Activated CD4-positive, alpha-beta memory T cell treated with anti-CD3 and anti-CD28 coated beads, Interleukin-2, amount 10 ng/mL, durations not matched to agents 7 days and 5 days (primary cell): ENCODE measurements at regions of chr9 and their contacts with region 1.

Region 1: DNA sequence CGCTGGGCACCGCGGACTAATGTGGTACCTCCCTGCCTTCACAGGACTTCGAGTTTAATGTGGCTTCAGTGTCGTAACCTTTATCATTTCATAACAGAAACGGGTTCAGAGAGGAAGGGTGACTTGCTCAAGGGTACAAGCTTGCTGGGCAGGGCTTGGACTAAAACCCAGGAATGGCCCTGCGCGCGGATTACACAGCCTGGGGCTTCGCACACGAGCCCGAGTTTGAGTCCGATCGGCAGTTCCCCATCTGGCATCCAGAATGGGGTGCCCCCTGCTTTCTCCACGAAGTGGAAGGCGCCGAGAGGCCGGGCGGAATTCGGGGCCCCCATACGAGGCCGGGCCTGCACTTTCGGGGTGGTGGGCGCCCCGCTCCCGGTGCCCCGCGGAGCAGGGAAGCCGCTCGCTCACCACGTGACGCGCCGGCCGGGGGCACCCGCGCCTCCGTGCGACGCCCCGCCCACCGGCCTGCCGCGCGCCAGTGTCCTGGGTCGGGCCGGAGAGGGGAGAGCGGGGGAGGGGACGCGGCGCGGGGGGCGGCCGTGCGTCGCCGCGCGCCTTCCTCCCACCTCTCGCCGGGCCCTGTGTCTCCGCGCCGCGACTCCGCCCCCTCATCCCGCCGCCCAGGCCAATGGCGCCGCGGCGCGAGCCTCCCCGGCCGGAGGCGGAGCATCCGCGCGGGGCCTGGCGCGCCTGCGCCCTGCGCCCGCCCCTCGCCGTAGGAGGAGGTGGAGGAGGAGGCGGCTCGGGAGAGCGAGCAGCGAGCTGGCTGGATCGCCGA is at the start of gene SET:
- DNase-seq: peak; percentile 95
- H3K4me3 Mint-ChIP-seq: peak within 1 kb of the TSS; percentile 98
- H3K27ac Mint-ChIP-seq: peak within 1 kb of the TSS; percentile 92
- H3K4me1 Mint-ChIP-seq: peaks cover 64% of the 10 kb centered on the region
- H3K27me3 Mint-ChIP-seq: no peaks in the 10 kb centered on the region
- total RNA-seq, gene SET: 355 to 379 TPM

Region 2: DNA sequence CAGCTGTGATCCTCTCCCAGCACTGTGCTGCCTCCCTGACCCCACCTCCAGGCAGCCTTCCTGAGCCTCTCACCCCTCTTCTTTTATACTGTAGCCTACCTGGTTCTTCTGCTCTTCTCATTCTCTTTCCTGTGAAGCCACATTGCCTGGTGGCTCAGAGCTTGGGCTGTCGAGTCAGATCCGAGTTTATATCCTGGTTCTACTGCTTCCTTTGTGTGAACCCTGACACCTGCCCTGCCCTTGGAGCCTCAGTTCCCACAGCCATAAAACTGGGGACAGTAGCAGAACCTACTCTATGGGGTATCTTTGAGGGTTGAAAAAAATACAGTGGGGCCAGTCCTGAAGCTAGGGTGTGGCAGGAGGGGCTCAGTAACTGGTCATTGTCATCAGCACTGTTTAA is 339.6 kb before region 1 on chr9:
- CTCF ChIA-PET with region 1: no interaction called
- POLR2A ChIA-PET with region 1: no interaction called
- DNase-seq: no peak
- H3K4me3 Mint-ChIP-seq: no peak overlapping the region
- H3K27ac Mint-ChIP-seq: no peak overlapping the region
- H3K4me1 Mint-ChIP-seq: no peaks in the 10 kb centered on the region
- H3K27me3 Mint-ChIP-seq: no peaks in the 10 kb centered on the region

Region 3: GRCh38 chr9:128438343-128439109 is 250.2 kb before region 1 on chr9:
- CTCF ChIA-PET with region 1: no interaction called
- POLR2A ChIA-PET with region 1: no interaction called
- DNase-seq: peak; percentile 85
- H3K4me3 Mint-ChIP-seq: no peak overlapping the region
- H3K27ac Mint-ChIP-seq: no peak overlapping the region
- H3K4me1 Mint-ChIP-seq: peaks cover 11% of the 10 kb centered on the region
- H3K27me3 Mint-ChIP-seq: no peaks in the 10 kb centered on the region

Region 4: GRCh38 chr9:128523199-128523925 is 165.3 kb before region 1 on chr9:
- CTCF ChIA-PET with region 1: no interaction called
- POLR2A ChIA-PET with region 1: no interaction called
- DNase-seq: no peak
- H3K4me3 Mint-ChIP-seq: no peak overlapping the region
- H3K27ac Mint-ChIP-seq: no peak overlapping the region
- H3K4me1 Mint-ChIP-seq: peaks cover 2% of the 10 kb centered on the region
- H3K27me3 Mint-ChIP-seq: no peaks in the 10 kb centered on the region

Region 5: GRCh38 chr9:128656416-128657343 is 32.0 kb before region 1 on chr9 and contains the start of gene DYNC2I2:
- CTCF ChIA-PET with region 1: interaction called, 4 read pairs
- POLR2A ChIA-PET with region 1: interaction called, 11 read pairs
- DNase-seq: peak; percentile 97
- H3K4me3 Mint-ChIP-seq: peak within 1 kb of the TSS; percentile 89
- H3K27ac Mint-ChIP-seq: peak within 1 kb of the TSS; percentile 99
- H3K4me1 Mint-ChIP-seq: peaks cover 18% of the 10 kb centered on the region
- H3K27me3 Mint-ChIP-seq: no peaks in the 10 kb centered on the region
- total RNA-seq, gene DYNC2I2: 51.5 to 53.5 TPM

Region 6: GRCh38 chr9:128702445-128702948 is 13.8 kb after region 1 on chr9 and contains the start of gene PKN3:
- CTCF ChIA-PET with region 1: interaction called, 17 read pairs
- POLR2A ChIA-PET with region 1: interaction called, 22 read pairs
- DNase-seq: peak; percentile 88
- H3K4me3 Mint-ChIP-seq: peak within 1 kb of the TSS; percentile 82
- H3K27ac Mint-ChIP-seq: peak within 1 kb of the TSS; percentile 3
- H3K4me1 Mint-ChIP-seq: peaks cover 13% of the 10 kb centered on the region
- H3K27me3 Mint-ChIP-seq: no peaks in the 10 kb centered on the region
- total RNA-seq, gene PKN3: 5.0 to 5.6 TPM

Region 7: GRCh38 chr9:128723866-128724743 is 35.4 kb after region 1 on chr9 and contains the start of gene ZDHHC12:
- CTCF ChIA-PET with region 1: no interaction called
- POLR2A ChIA-PET with region 1: interaction called, 24 read pairs
- DNase-seq: peak; percentile 100
- H3K4me3 Mint-ChIP-seq: peak within 1 kb of the TSS; percentile 97
- H3K27ac Mint-ChIP-seq: peak within 1 kb of the TSS; percentile 87
- H3K4me1 Mint-ChIP-seq: peaks cover 46% of the 10 kb centered on the region
- H3K27me3 Mint-ChIP-seq: no peaks in the 10 kb centered on the region
- total RNA-seq, gene ZDHHC12: 79.3 to 81.5 TPM

Region 8: GRCh38 chr9:128771745-128772519 is 83.2 kb after region 1 on chr9 and contains the start of gene ZER1:
- CTCF ChIA-PET with region 1: interaction called, 5 read pairs
- POLR2A ChIA-PET with region 1: interaction called, 11 read pairs
- DNase-seq: peak; percentile 94
- H3K4me3 Mint-ChIP-seq: peak within 1 kb of the TSS; percentile 98
- H3K27ac Mint-ChIP-seq: peak within 1 kb of the TSS; percentile 94
- H3K4me1 Mint-ChIP-seq: peaks cover 21% of the 10 kb centered on the region
- H3K27me3 Mint-ChIP-seq: no peaks in the 10 kb centered on the region
- total RNA-seq, gene ZER1: 24.1 to 24.4 TPM

Region 9: GRCh38 chr9:128825923-128826702 is 137.4 kb after region 1 on chr9:
- CTCF ChIA-PET with region 1: no interaction called
- POLR2A ChIA-PET with region 1: no interaction called
- DNase-seq: no peak
- H3K4me3 Mint-ChIP-seq: no peak overlapping the region
- H3K27ac Mint-ChIP-seq: no peak overlapping the region
- H3K4me1 Mint-ChIP-seq: peaks cover 26% of the 10 kb centered on the region
- H3K27me3 Mint-ChIP-seq: no peaks in the 10 kb centered on the region